Panc1 (cell line): ENCODE measurements at regions of chr14 and their contacts with region 1.

Region 1: DNA sequence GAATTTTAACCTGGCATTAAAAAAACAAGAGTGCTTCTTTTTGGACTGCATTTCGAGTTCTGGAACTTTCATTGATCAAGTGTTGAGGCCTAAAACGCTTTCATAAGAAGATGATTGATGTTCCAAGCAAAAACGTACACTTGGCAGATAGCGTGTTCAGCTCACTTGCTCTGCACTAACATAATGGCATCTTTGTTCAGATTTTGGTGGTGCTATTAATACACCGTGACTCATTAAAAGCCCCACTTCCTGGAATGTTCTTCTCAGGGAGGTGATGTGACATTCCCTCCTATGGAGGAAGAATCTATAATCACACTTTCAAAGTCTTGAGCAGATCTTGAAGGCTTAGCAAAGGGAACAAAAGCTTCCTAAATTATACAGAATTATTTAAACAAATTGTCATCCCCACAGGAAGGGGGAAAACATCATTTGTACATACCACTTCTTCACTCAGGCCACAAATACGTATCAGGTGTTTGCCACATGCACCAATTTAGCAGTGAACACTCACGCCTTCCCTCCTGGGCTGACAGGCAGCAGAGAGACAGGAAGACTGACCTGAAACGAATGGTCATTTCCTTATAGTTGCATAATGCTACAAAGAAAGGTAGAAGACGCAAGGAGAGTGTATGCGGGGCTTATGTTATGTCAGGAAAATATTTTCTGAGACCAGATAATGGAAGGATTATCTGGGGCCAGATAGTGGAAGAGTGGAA is 15.4 kb downstream of the HSP90AA1 start:
- DNase-seq: no peak
- ATAC-seq: peak; percentile 26; the same call in 1 of the 2 replicates
- H3K4me3 ChIP-seq: no peak overlapping the region
- H3K27ac ChIP-seq: no peak overlapping the region
- H3K4me1 ChIP-seq: peaks cover 7% of the 10 kb centered on the region; the same call in 1 of the 2 replicates
- H3K27me3 ChIP-seq: no peaks in the 10 kb centered on the region
- CTCF ChIP-seq: no peak

Region 2: GRCh38 chr14:101635749-101636560 is 435.5 kb before region 1 on chr14:
- CTCF ChIA-PET with region 1: no interaction called
- POLR2A ChIA-PET with region 1: no interaction called
- in situ Hi-C with region 1: no loop called
- intact Hi-C with region 1: no loop called
- DNase-seq: no peak
- ATAC-seq: 0 out of 2 replicates have a peak, but pooled peaks have one; percentile 53
- H3K4me3 ChIP-seq: no peak overlapping the region
- H3K27ac ChIP-seq: no peak overlapping the region
- H3K4me1 ChIP-seq: no peaks in the 10 kb centered on the region
- H3K27me3 ChIP-seq: no peaks in the 10 kb centered on the region
- CTCF ChIP-seq: no peak

Region 3: GRCh38 chr14:102086972-102087761 is 15.7 kb after region 1 on chr14 and contains the start of gene HSP90AA1:
- CTCF ChIA-PET with region 1: interaction called, 18 read pairs
- POLR2A ChIA-PET with region 1: no interaction called
- in situ Hi-C with region 1: no loop called
- intact Hi-C with region 1: no loop called
- DNase-seq: no peak
- ATAC-seq: peak; percentile 89
- H3K4me3 ChIP-seq: peak within 1 kb of the TSS; percentile 67 to 82
- H3K27ac ChIP-seq: peak within 1 kb of the TSS; percentile 91
- H3K4me1 ChIP-seq: peaks cover 24% of the 10 kb centered on the region
- H3K27me3 ChIP-seq: no peaks in the 10 kb centered on the region
- CTCF ChIP-seq: no peak
- total RNA-seq, gene HSP90AA1: 383 TPM